ENCODE measurements at regions of chr5 and their contacts with region 1.

Region 1: GRCh38 chr5:137498736-137499505 is at the start of gene SPOCK1:
- DNase-seq: peak in 1 of 2 donors; percentile 74
- ATAC-seq: peak; percentile 97
- total RNA-seq, gene SPOCK1: 2.3 to 11.1 TPM

Region 2: DNA sequence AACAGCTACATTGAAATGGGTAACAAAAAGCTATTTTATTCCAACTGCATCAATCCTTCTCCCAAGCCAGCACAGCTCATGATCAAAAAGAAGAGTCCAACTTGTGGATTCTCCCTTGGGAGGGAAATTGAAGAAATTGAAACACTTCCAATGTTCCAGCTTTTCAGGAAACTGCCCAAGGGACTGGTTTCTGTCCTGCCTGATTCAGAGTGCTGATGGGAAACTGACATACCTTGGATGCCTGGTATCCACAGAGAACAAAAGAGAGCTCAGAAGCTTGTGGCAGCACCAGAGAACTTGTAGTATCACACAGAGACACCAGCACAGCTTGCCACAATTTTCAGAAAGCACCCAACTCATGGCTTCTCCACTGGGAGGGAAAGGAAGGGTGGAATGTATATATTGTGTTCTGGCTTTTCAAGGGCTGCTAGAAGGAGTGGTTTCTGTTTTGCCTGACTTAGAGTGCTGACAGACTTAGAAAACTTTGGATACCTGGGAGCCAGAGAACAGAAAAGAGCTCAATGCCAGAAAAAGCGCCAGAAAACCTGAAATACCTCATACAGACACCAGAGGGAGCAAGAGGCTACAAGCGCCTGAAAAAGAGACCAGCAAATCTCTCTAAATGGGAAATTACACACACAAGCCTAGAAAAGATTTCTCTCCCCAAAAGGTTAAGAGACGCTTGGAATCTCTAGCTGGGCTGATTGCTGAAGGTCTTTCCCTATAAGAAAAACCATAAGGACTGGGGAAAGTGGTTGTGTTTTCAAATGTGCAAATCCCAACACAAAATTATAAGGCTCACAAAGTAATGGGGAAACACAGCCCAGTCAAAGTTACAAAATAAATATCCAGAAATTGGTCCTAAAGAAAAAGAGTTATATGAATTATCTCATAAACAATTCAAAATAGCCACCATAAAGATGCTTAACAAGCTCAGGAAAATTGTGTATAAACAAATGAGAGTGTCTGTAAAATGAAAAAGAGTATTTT is 178.6 kb before region 1 on chr5:
- intact Hi-C with region 1: loop called in 1 of 2 experiments (anchors 10 kb)
- DNase-seq: no peak
- ATAC-seq: peak; percentile 45

Region 3: DNA sequence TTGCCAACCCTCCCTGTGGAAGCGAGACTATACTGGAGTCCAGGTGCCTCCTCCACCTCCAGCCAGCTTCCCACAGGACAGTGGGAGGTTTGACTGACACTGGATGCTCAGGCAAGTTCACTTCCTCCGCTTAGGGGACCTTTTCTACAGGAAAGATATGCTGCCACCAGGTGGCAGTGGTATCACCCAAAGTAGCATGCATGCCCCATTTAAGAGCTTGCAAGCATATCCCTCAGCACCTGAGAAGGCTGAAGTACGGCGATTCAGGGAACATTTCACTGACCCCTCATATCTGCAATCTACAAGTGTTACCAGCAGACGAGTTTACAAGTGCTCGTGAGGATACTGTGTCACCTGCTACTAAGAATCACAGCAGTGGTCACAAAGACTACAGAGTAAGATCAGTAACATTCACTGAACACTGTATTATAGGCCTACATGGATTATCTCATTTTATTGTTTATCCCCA is 161.5 kb after region 1 on chr5:
- intact Hi-C with region 1: no loop called
- DNase-seq: peak; percentile 59 to 84
- ATAC-seq: peak; percentile 95

Region 4: GRCh38 chr5:138178516-138179276 is 679.8 kb after region 1 on chr5 and contains the starts of genes BRD8 and KIF20A:
- intact Hi-C with region 1: no loop called
- DNase-seq: peak; percentile 97 to 98
- ATAC-seq: peak; percentile 93
- total RNA-seq, gene BRD8: 29.6 to 33.8 TPM
- total RNA-seq, gene KIF20A: 4.0 to 6.5 TPM

Measured in left colon (tissue), 2 donors.